CD14-positive monocyte (primary cell): ENCODE measurements at regions of chr4 and their contacts with region 1.

Region 1: GRCh38 chr4:40719008-40719623 is 30.6 kb upstream of the NSUN7 start:
- DNase-seq: peak in 2 of 3 donors; percentile 45 to 56
- H3K4me3 ChIP-seq: no peak overlapping the region
- H3K4me3 Mint-ChIP-seq: no peak overlapping the region
- H3K27ac ChIP-seq: no peak overlapping the region
- H3K27ac Mint-ChIP-seq: peak overlapping the region in 3 of 7 donors; percentile 7 to 61 (median 25)
- H3K4me1 ChIP-seq: peaks cover 49 to 59% of the 10 kb centered on the region in 2 donors
- H3K4me1 Mint-ChIP-seq: peaks cover 28% of the 10 kb centered on the region
- H3K27me3 ChIP-seq: no peaks in the 10 kb centered on the region
- H3K27me3 Mint-ChIP-seq: peaks cover 0 to 3% (median 0%) of the 10 kb centered on the region in 3 donors
- CTCF ChIP-seq: peak; percentile 59

Region 2: GRCh38 chr4:40309250-40309774 is 409.8 kb before region 1 on chr4:
- intact Hi-C with region 1: loop called in 1 of 2 experiments (anchors 10 kb)
- DNase-seq: peak; percentile 74 to 85 (median 80)
- H3K4me3 ChIP-seq: no peak overlapping the region
- H3K4me3 Mint-ChIP-seq: peak overlapping the region; percentile 60 to 83
- H3K27ac ChIP-seq: peak overlapping the region in 1 of 2 donors; percentile 89
- H3K27ac Mint-ChIP-seq: peak overlapping the region; percentile 87 to 98 (median 97)
- H3K4me1 ChIP-seq: peaks cover 54 to 59% of the 10 kb centered on the region in 2 donors
- H3K4me1 Mint-ChIP-seq: peaks cover 64% of the 10 kb centered on the region
- H3K27me3 ChIP-seq: no peaks in the 10 kb centered on the region
- H3K27me3 Mint-ChIP-seq: peaks cover 7 to 16% (median 8%) of the 10 kb centered on the region in 3 donors
- CTCF ChIP-seq: peak; percentile 87

Region 3: GRCh38 chr4:40550948-40551462 is 168.1 kb before region 1 on chr4:
- intact Hi-C with region 1: loop called in 1 of 2 experiments (anchors 10 kb)
- DNase-seq: peak; percentile 53 to 69 (median 65)
- H3K4me3 ChIP-seq: peak overlapping the region; percentile 36 to 71 (median 54)
- H3K4me3 Mint-ChIP-seq: peak overlapping the region; percentile 80 to 91
- H3K27ac ChIP-seq: peak overlapping the region; percentile 81 to 93
- H3K27ac Mint-ChIP-seq: peak overlapping the region; percentile 93 to 99 (median 98)
- H3K4me1 ChIP-seq: peaks cover 78 to 86% of the 10 kb centered on the region in 2 donors
- H3K4me1 Mint-ChIP-seq: peaks cover 78% of the 10 kb centered on the region
- H3K27me3 ChIP-seq: no peaks in the 10 kb centered on the region
- H3K27me3 Mint-ChIP-seq: no peaks in the 10 kb centered on the region
- CTCF ChIP-seq: peak; percentile 33

Region 4: GRCh38 chr4:40629401-40630334 is 89.4 kb before region 1 on chr4 and contains the start of gene RBM47:
- intact Hi-C with region 1: loop called in 1 of 2 experiments (anchors 5 kb)
- DNase-seq: peak; percentile 62 to 75 (median 66)
- H3K4me3 ChIP-seq: peak within 1 kb of the TSS; percentile 91 to 99 (median 97)
- H3K4me3 Mint-ChIP-seq: peak within 1 kb of the TSS; percentile 98 to 100
- H3K27ac ChIP-seq: peak within 1 kb of the TSS; percentile 97 to 100
- H3K27ac Mint-ChIP-seq: peak within 1 kb of the TSS; percentile 99 to 100 (median 99)
- H3K4me1 ChIP-seq: peaks cover 51 to 70% of the 10 kb centered on the region in 2 donors
- H3K4me1 Mint-ChIP-seq: peaks cover 59% of the 10 kb centered on the region
- H3K27me3 ChIP-seq: no peaks in the 10 kb centered on the region
- H3K27me3 Mint-ChIP-seq: peaks cover 0 to 3% (median 0%) of the 10 kb centered on the region in 3 donors
- CTCF ChIP-seq: peak; percentile 32
- polyA plus RNA-seq, gene RBM47: 79.5 to 101 (median 92.8) TPM

Region 5: GRCh38 chr4:40685300-40685699 is 33.8 kb before region 1 on chr4:
- intact Hi-C with region 1: loop called in 1 of 2 experiments (anchors 5 kb)
- DNase-seq: no peak
- H3K4me3 ChIP-seq: no peak overlapping the region
- H3K4me3 Mint-ChIP-seq: no peak overlapping the region
- H3K27ac ChIP-seq: no peak overlapping the region
- H3K27ac Mint-ChIP-seq: no peak overlapping the region
- H3K4me1 ChIP-seq: peaks cover 35 to 48% of the 10 kb centered on the region in 2 donors
- H3K4me1 Mint-ChIP-seq: peaks cover 47% of the 10 kb centered on the region
- H3K27me3 ChIP-seq: no peaks in the 10 kb centered on the region
- H3K27me3 Mint-ChIP-seq: peaks cover 0 to 3% (median 0%) of the 10 kb centered on the region in 3 donors
- CTCF ChIP-seq: no peak

Region 6: GRCh38 chr4:42412251-42412650 is 1693.1 kb after region 1 on chr4:
- intact Hi-C with region 1: no loop called
- DNase-seq: no peak
- H3K4me3 ChIP-seq: no peak overlapping the region
- H3K4me3 Mint-ChIP-seq: no peak overlapping the region
- H3K27ac ChIP-seq: no peak overlapping the region
- H3K27ac Mint-ChIP-seq: no peak overlapping the region
- H3K4me1 ChIP-seq: no peaks in the 10 kb centered on the region
- H3K4me1 Mint-ChIP-seq: no peaks in the 10 kb centered on the region
- H3K27me3 ChIP-seq: no peaks in the 10 kb centered on the region
- H3K27me3 Mint-ChIP-seq: no peaks in the 10 kb centered on the region
- CTCF ChIP-seq: no peak